Gastrocnemius medialis (tissue), 4 donors: ENCODE measurements at regions of chr2 and their contacts with region 1.

Region 1: DNA sequence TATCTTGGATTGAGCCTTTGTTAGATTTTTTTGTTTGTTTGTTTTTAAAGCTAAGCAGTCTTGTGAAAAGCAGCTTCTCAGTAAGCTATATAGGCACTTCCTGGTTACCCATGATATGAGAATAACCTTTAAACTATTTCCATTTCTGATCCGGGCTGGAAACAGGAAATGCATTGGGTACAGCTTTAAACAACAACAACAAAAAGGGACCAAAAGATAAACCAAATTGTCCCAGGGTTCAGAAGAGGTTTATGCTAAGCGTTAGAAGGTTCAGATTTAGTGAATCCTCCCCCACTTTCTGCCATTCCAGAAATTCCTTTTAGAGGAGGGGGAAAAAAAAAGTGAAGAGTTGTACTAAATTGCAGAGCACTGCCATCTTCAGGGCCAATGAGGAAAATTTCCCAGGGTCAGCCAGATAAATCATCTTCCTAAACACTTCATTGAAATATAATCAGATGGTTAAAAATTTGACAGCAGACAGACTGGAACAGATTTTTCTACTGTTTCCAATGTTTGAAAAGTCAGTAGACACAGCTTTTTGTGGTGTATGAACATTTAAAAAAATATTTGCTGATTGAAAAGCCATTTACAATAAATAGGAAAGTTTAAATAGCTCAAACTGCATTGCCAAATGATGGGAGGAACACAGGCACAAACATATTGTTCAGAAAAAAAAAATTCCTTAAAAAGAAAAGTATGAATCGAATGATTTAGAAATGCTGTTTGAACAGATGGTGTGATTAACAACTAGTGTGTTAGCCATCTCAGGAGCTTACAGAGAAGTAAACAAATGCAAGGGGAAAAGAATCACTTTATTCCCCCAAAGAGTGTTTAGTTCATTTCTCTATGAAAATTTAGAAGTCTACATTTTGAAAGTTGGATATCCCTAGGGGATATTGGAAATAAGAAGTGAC is 189.9 kb upstream of the TANK start:
- DNase-seq: peak in 1 of 2 donors; percentile 6
- ATAC-seq: peak; percentile 54 to 72
- H3K4me3 ChIP-seq: peak overlapping the region in 3 of 4 donors; percentile 10 to 14 (median 13)
- H3K27ac ChIP-seq: peak overlapping the region in 2 of 4 donors; percentile 16
- H3K4me1 ChIP-seq: no peaks in the 10 kb centered on the region
- H3K27me3 ChIP-seq: no peaks in the 10 kb centered on the region
- CTCF ChIP-seq: peak; percentile 15 to 72 (median 48)
- POLR2A ChIP-seq: no peak

Region 2: DNA sequence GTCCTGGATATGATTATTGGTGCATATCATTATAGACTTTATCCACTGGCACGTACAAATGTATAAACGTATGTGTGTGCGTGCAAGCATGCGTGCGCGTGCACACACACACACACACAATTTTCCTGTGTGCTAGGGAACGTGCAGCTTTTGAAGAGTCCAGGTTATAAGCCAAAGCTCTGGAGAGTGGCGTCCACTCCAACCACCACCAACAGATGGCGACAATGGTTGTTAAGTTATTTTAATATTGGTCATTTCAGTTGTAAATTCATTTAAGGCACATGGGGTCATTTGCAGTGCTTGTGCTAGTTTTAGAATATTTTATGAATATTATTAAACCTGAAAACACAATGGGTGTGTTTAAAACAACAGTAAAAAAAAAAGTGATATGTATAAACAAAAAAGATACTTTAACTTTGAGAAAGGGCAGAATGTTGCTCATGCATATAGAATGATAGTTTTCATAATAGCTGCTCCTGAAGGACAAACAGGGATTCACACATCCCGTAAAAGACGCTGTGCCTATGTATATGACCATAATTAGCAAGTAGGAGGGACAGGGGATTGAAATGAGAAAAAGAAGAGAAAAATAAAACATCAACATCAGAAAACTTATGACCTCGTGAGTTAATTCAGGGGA is 646.0 kb before region 1 on chr2:
- in situ Hi-C with region 1: loop called in 1 of 4 experiments (anchors 25 kb)
- intact Hi-C with region 1: no loop called
- DNase-seq: peak in 1 of 2 donors; percentile 49
- ATAC-seq: peak; percentile 56 to 63
- H3K4me3 ChIP-seq: no peak overlapping the region
- H3K27ac ChIP-seq: no peak overlapping the region
- H3K4me1 ChIP-seq: peaks cover 47 to 50% of the 10 kb centered on the region in 2 donors
- H3K27me3 ChIP-seq: no peaks in the 10 kb centered on the region
- CTCF ChIP-seq: peak; percentile 54 to 81 (median 76)
- POLR2A ChIP-seq: no peak

Region 3: GRCh38 chr2:160429248-160430000 is 540.9 kb before region 1 on chr2:
- in situ Hi-C with region 1: loop called in 1 of 4 experiments (anchors 25 kb)
- intact Hi-C with region 1: loop called (anchors 10 kb)
- DNase-seq: no peak
- ATAC-seq: peak in 1 of 2 donors; percentile 47
- H3K4me3 ChIP-seq: no peak overlapping the region
- H3K27ac ChIP-seq: peak overlapping the region; percentile 4 to 63 (median 49)
- H3K4me1 ChIP-seq: peaks cover 36 to 38% of the 10 kb centered on the region in 2 donors
- H3K27me3 ChIP-seq: no peaks in the 10 kb centered on the region
- CTCF ChIP-seq: peak in 4 of 5 experiments; percentile 38 to 65 (median 56)
- POLR2A ChIP-seq: no peak

Region 4: DNA sequence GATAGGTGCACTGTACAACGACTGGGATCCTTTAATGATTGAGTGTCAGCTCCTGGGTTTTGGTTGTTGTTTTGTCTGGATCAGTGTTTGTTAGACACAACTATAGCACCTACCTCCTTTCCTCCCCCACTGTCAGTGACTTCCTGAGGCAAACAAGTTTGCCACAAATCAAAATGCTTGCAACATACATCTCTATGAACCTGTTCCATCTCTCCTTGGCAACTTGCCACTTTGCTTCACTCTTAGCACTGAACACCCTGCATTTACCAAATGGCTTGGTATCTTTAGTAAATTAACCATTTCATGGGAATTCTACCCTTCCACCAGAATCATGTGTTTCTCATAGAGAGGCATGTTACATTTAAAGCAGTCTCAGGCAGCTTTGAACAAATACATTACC is 111.2 kb before region 1 on chr2:
- in situ Hi-C with region 1: no loop called
- intact Hi-C with region 1: no loop called
- DNase-seq: no peak
- ATAC-seq: no peak
- H3K4me3 ChIP-seq: no peak overlapping the region
- H3K27ac ChIP-seq: no peak overlapping the region
- H3K4me1 ChIP-seq: no peaks in the 10 kb centered on the region
- H3K27me3 ChIP-seq: no peaks in the 10 kb centered on the region
- CTCF ChIP-seq: no peak
- POLR2A ChIP-seq: no peak

Region 5: DNA sequence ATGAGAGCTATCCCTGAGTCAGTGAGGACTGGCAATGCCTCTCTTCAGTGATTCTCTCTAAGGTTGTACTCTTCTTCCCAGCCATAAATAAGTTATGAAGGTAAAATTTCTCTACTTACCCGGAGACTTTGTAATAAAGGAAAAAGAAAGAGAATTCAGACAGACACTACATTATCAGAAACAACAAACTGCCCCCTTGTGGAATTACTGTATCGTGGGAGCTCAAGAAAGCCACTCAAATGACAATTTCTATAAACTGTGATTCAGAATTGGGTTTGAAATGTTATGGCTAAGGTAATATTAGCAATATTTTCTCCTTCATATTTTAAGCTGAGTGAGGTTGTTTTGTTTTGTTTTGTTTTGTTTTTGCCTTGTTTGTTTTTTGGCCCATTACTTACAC is 34.1 kb after region 1 on chr2:
- in situ Hi-C with region 1: no loop called
- intact Hi-C with region 1: no loop called
- DNase-seq: no peak
- ATAC-seq: no peak
- H3K4me3 ChIP-seq: no peak overlapping the region
- H3K27ac ChIP-seq: no peak overlapping the region
- H3K4me1 ChIP-seq: no peaks in the 10 kb centered on the region
- H3K27me3 ChIP-seq: no peaks in the 10 kb centered on the region
- CTCF ChIP-seq: peak in 2 of 5 experiments; percentile 18 to 21
- POLR2A ChIP-seq: no peak